ENCODE measurements at regions of chr6 and their contacts with region 1.

Region 1: GRCh38 chr6:119349323-119350042 is at the start of gene MAN1A1:
- DNase-seq: peak; percentile 94
- ATAC-seq: peak; percentile 83
- H3K4me3 ChIP-seq: peak within 1 kb of the TSS; percentile 73 to 95 (median 88)
- H3K4me3 Mint-ChIP-seq: peak within 1 kb of the TSS; percentile 90
- H3K27ac ChIP-seq: peak within 1 kb of the TSS; percentile 85 to 94
- H3K27ac Mint-ChIP-seq: peak within 1 kb of the TSS; percentile 80
- H3K4me1 ChIP-seq: peaks cover 35 to 58% of the 10 kb centered on the region in 2 donors
- H3K4me1 Mint-ChIP-seq: peaks cover 55% of the 10 kb centered on the region
- H3K27me3 ChIP-seq: no peaks in the 10 kb centered on the region
- H3K27me3 Mint-ChIP-seq: no peaks in the 10 kb centered on the region
- CTCF ChIP-seq: no peak
- total RNA-seq, gene MAN1A1: 31.5 and 31.7 TPM in 2 replicates

Region 2: GRCh38 chr6:117674991-117675657 is 1674.4 kb before region 1 on chr6 and contains the start of gene NUS1:
- CTCF ChIA-PET with region 1: no interaction called
- POLR2A ChIA-PET with region 1: no interaction called
- intact Hi-C with region 1: loop called (anchors 2 kb)
- DNase-seq: peak; percentile 98
- ATAC-seq: peak; percentile 98
- H3K4me3 ChIP-seq: peak within 1 kb of the TSS; percentile 55 to 81 (median 65)
- H3K4me3 Mint-ChIP-seq: peak within 1 kb of the TSS; percentile 90
- H3K27ac ChIP-seq: peak within 1 kb of the TSS; percentile 55 to 75
- H3K27ac Mint-ChIP-seq: peak within 1 kb of the TSS; percentile 94
- H3K4me1 ChIP-seq: peaks cover 28 to 30% of the 10 kb centered on the region in 2 donors
- H3K4me1 Mint-ChIP-seq: peaks cover 42% of the 10 kb centered on the region
- H3K27me3 ChIP-seq: no peaks in the 10 kb centered on the region
- H3K27me3 Mint-ChIP-seq: no peaks in the 10 kb centered on the region
- CTCF ChIP-seq: peak; percentile 75
- total RNA-seq, gene NUS1: 22.1 and 23.1 TPM in 2 replicates

Region 3: DNA sequence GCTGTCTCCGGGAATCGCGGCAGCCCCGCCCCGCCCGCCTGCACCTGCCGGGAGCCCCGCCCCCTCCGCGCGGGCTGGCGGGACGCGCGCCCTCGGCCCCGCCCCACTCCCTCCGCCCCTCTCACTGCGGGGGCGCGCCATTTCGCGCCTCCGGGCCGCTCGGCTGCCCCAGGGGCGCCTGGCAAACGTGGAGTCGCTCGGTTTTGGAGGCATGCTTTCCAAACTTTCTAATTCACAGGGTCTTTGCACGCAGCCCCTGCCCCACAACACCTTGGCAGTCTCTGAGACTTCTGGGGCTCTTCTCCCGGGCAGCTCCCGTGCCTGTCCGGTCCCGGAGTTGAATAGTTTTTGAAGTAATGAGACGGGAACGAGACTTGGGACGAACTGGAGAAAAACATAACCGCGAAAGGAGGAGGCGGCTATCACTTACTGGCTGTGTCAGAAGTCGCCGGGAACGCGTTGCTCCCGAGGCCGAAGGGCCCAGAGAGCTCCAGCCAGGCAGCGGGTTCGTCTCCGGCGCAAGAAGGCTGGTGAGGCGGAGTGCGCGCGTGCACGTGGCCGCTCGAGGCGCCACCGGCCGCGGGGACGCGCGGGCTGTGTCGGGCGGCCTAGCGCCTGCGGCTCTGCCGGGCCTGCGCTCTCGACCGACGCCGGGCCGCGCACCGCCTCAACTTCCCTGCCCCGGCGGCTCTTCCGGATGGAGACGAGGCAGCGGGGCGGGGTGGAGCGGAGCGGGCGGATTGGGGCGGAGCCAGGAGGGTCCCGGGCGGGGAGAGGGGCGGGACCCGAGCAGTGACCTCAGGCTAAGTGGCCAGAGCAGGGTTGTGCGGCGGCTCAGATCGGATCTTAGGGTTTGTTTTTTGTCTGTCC is 414.8 kb before region 1 on chr6 and contains the start of gene MCM9:
- CTCF ChIA-PET with region 1: no interaction called
- POLR2A ChIA-PET with region 1: no interaction called
- intact Hi-C with region 1: loop called (anchors 2 kb)
- DNase-seq: peak; percentile 93
- ATAC-seq: peak; percentile 89
- H3K4me3 ChIP-seq: peak within 1 kb of the TSS; percentile 91 to 99 (median 94)
- H3K4me3 Mint-ChIP-seq: peak within 1 kb of the TSS; percentile 92
- H3K27ac ChIP-seq: peak within 1 kb of the TSS; percentile 83 to 90
- H3K27ac Mint-ChIP-seq: peak within 1 kb of the TSS; percentile 92
- H3K4me1 ChIP-seq: peaks cover 10 to 18% of the 10 kb centered on the region in 2 donors
- H3K4me1 Mint-ChIP-seq: peaks cover 35% of the 10 kb centered on the region
- H3K27me3 ChIP-seq: no peaks in the 10 kb centered on the region
- H3K27me3 Mint-ChIP-seq: no peaks in the 10 kb centered on the region
- CTCF ChIP-seq: no peak
- total RNA-seq, gene MCM9: 51.0 and 54.5 TPM in 2 replicates

Region 4: GRCh38 chr6:119259027-119259426 is 90.5 kb before region 1 on chr6:
- CTCF ChIA-PET with region 1: no interaction called
- POLR2A ChIA-PET with region 1: no interaction called
- intact Hi-C with region 1: no loop called
- DNase-seq: no peak
- ATAC-seq: no peak
- H3K4me3 ChIP-seq: no peak overlapping the region
- H3K4me3 Mint-ChIP-seq: no peak overlapping the region
- H3K27ac ChIP-seq: no peak overlapping the region
- H3K27ac Mint-ChIP-seq: no peak overlapping the region
- H3K4me1 ChIP-seq: no peaks in the 10 kb centered on the region
- H3K4me1 Mint-ChIP-seq: no peaks in the 10 kb centered on the region
- H3K27me3 ChIP-seq: no peaks in the 10 kb centered on the region
- H3K27me3 Mint-ChIP-seq: no peaks in the 10 kb centered on the region
- CTCF ChIP-seq: no peak

Region 5: GRCh38 chr6:119390247-119390793 is 40.8 kb after region 1 on chr6:
- CTCF ChIA-PET with region 1: no interaction called
- POLR2A ChIA-PET with region 1: no interaction called
- intact Hi-C with region 1: loop called (anchors 5 kb)
- DNase-seq: no peak
- ATAC-seq: no peak
- H3K4me3 ChIP-seq: no peak overlapping the region
- H3K4me3 Mint-ChIP-seq: no peak overlapping the region
- H3K27ac ChIP-seq: no peak overlapping the region
- H3K27ac Mint-ChIP-seq: no peak overlapping the region
- H3K4me1 ChIP-seq: peaks cover 13 to 15% of the 10 kb centered on the region in 2 donors
- H3K4me1 Mint-ChIP-seq: peaks cover 15% of the 10 kb centered on the region
- H3K27me3 ChIP-seq: peaks cover 0 to 5% (median 0%) of the 10 kb centered on the region in 4 experiments
- H3K27me3 Mint-ChIP-seq: peaks cover 3% of the 10 kb centered on the region
- CTCF ChIP-seq: no peak

Region 6: DNA sequence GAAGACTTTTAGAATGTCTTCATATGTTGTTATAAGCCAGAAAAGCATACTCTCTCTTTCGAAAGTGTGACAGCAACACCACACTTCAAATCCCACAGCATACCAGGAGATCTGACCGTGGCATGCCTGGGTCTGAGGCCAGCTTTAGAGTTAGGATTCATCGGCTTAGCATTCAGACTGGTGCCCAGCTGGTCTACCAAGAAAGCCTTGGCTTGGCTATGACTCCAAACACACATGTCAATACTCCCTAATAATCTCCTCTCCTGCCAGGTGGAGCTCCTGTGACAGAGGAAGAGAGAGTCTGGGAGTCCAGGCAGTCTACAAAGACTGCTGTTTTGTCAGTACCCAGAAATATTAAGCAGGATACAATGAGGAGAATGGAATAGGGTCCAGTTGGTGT is 77.1 kb after region 1 on chr6:
- CTCF ChIA-PET with region 1: no interaction called
- POLR2A ChIA-PET with region 1: no interaction called
- intact Hi-C with region 1: no loop called
- DNase-seq: no peak
- ATAC-seq: no peak
- H3K4me3 ChIP-seq: no peak overlapping the region
- H3K4me3 Mint-ChIP-seq: no peak overlapping the region
- H3K27ac ChIP-seq: no peak overlapping the region
- H3K27ac Mint-ChIP-seq: no peak overlapping the region
- H3K4me1 ChIP-seq: no peaks in the 10 kb centered on the region
- H3K4me1 Mint-ChIP-seq: no peaks in the 10 kb centered on the region
- H3K27me3 ChIP-seq: no peaks in the 10 kb centered on the region
- H3K27me3 Mint-ChIP-seq: no peaks in the 10 kb centered on the region
- CTCF ChIP-seq: no peak

Region 7: DNA sequence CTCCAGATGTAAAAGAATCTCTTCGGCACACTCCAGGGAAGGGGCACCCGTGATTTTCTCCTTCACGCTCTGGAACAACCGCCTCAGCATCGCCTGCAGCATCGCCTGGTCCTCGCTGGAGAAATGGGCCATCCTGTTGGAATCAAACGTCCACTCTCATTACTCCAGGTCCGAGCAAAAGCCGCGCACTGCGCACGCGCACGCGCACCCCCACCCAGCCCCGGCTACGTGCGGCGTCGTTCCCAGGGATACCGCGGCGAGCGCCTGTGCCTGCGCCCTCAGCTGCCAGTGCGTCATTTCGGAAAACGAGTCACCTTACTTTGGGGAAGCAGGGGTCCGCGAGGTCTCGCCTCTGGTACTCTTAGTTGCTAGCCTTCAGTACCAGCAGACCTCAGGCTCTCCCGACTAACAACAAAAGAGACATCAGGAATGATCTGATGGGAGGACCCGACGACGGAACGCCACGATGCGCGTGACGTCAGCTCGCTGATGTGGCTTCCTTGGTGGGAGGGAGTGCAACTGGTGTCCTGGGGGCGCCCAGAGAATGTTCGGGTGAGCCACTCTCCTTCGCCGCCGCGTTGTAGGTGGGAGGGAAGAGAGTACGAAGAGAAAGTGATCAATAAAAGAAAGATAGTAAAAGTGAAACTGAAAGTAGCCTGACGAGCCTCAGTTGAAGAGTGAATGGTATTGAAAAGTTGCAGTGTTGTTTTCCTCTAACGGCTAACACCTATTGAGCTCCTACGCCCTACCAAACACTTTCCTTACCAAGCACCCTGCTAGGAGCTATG is 1985.0 kb after region 1 on chr6 and contains the start of gene TBC1D32:
- CTCF ChIA-PET with region 1: no interaction called
- POLR2A ChIA-PET with region 1: no interaction called
- intact Hi-C with region 1: loop called (anchors 2 kb)
- DNase-seq: peak; percentile 93
- ATAC-seq: peak; percentile 90
- H3K4me3 ChIP-seq: peak within 1 kb of the TSS; percentile 51 to 96 (median 81)
- H3K4me3 Mint-ChIP-seq: peak within 1 kb of the TSS; percentile 98
- H3K27ac ChIP-seq: peak within 1 kb of the TSS; percentile 91 to 96
- H3K27ac Mint-ChIP-seq: peak within 1 kb of the TSS; percentile 98
- H3K4me1 ChIP-seq: peaks cover 8 to 13% of the 10 kb centered on the region in 2 donors
- H3K4me1 Mint-ChIP-seq: peaks cover 30% of the 10 kb centered on the region
- H3K27me3 ChIP-seq: peaks cover 0 to under 1% (median 0%) of the 10 kb centered on the region in 4 experiments
- H3K27me3 Mint-ChIP-seq: no peaks in the 10 kb centered on the region
- CTCF ChIP-seq: no peak
- total RNA-seq, gene TBC1D32: 20.9 and 23.8 TPM in 2 replicates